ENCODE measurements at regions of chr15 and their contacts with region 1.

Region 1: DNA sequence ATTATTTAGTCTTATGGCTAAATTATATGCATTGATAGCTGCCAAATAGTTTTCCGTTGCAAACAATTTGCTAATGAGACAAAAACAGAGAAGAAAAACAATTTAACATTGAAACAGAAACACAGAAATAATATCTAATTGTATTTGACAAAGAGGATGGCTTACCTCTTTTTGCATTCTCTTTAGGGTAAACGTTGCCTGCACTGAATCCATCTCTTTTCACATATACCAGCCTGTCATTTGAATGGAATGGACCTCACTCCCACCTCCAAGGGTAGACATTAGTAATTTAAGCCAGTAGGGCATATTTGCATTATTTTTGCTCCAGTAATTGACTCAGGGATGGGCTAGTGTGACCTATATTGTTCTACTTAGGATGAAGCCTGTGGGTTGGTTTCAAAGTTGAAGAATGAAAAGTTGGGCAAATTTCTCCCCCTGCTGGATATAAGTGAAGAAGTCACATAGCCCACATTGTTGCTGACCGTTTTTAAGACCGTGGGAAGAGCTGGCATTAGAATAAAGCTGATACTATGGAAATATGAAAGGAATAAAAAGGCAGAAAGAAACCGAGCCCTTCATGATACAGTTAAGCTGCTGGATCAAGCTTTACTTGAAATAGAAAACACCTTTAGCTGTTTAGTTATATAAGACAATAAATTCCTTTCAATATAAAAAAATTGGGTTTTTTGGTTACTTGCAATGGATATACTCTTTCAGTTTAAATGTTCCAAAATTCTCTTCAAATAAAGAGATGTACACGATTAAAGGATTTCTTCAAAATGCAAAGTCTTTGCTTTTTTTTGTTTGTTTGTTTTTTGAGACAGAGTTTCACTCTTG is 26.9 kb downstream of the PIERCE2 start:
- DNase-seq: peak; percentile 31
- ATAC-seq: peak; percentile 86
- H3K4me3 Mint-ChIP-seq: no peak overlapping the region
- H3K27ac Mint-ChIP-seq: no peak overlapping the region
- H3K4me1 Mint-ChIP-seq: peaks cover 4% of the 10 kb centered on the region
- H3K27me3 Mint-ChIP-seq: no peaks in the 10 kb centered on the region

Region 2: DNA sequence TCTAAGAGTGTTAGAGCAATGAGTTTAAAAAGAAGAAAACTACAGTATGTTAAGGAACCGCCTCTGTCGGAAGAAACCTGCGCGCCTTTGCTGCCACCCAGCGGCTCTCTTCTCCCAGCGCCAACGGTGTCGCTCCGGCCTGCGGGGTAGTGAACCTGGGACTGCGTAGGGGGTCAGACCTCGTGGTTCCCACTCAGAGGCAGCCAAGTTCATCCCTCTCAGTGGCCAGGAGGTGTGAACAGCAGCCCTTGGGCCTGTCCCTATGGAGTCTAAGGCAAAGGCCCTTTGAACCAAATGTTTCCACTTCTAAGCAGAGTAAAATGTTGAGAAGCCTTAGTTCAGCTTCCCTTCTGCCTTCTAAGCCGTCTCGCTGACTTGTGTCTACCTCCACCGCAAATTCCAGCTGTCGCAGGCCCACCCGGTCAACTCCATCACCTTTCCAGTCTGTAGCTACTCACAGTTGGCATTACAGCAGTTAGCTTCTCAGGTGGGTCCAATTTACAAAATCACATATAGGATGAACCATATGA is 144.6 kb before region 1 on chr15:
- CTCF ChIA-PET with region 1: interaction called, 10 read pairs
- POLR2A ChIA-PET with region 1: no interaction called
- DNase-seq: peak; percentile 89
- ATAC-seq: peak; percentile 78
- H3K4me3 Mint-ChIP-seq: peak overlapping the region; percentile 86
- H3K27ac Mint-ChIP-seq: peak overlapping the region; percentile 86
- H3K4me1 Mint-ChIP-seq: peaks cover 33% of the 10 kb centered on the region
- H3K27me3 Mint-ChIP-seq: no peaks in the 10 kb centered on the region

Region 3: GRCh38 chr15:55407949-55408791 is 27.0 kb before region 1 on chr15 and contains the starts of genes CCPG1 and PIERCE2:
- CTCF ChIA-PET with region 1: interaction called, 22 read pairs
- POLR2A ChIA-PET with region 1: interaction called, 3 read pairs
- DNase-seq: peak; percentile 91
- ATAC-seq: peak; percentile 96
- H3K4me3 Mint-ChIP-seq: peak within 1 kb of the TSS; percentile 84
- H3K27ac Mint-ChIP-seq: peak within 1 kb of the TSS; percentile 89
- H3K4me1 Mint-ChIP-seq: peaks cover 29% of the 10 kb centered on the region
- H3K27me3 Mint-ChIP-seq: no peaks in the 10 kb centered on the region
- total RNA-seq, gene CCPG1: 8.2 to 10.4 TPM
- total RNA-seq, gene PIERCE2: not detected